Naive thymus-derived CD4-positive, alpha-beta T cell (primary cell): ENCODE measurements at regions of chr3 and their contacts with region 1.

Region 1: GRCh38 chr3:171320750-171321558 is 139.3 kb downstream of the TNIK start:
- DNase-seq: no peak
- ATAC-seq: no peak
- H3K4me3 ChIP-seq: no peak overlapping the region
- H3K4me3 Mint-ChIP-seq: no peak overlapping the region
- H3K27ac ChIP-seq: no peak overlapping the region
- H3K27ac Mint-ChIP-seq: no peak overlapping the region
- H3K4me1 ChIP-seq: peaks cover 0 to 7% of the 10 kb centered on the region in 2 donors
- H3K4me1 Mint-ChIP-seq: peaks cover 20 to 66% (median 46%) of the 10 kb centered on the region in 7 donors
- H3K27me3 ChIP-seq: no peaks in the 10 kb centered on the region
- H3K27me3 Mint-ChIP-seq: no peaks in the 10 kb centered on the region

Region 2: GRCh38 chr3:170614214-170614966 is 706.6 kb before region 1 on chr3:
- CTCF ChIA-PET with region 1: no interaction called
- POLR2A ChIA-PET with region 1: no interaction called
- intact Hi-C with region 1: no loop called
- DNase-seq: no peak
- ATAC-seq: no peak
- H3K4me3 ChIP-seq: no peak overlapping the region
- H3K4me3 Mint-ChIP-seq: no peak overlapping the region
- H3K27ac ChIP-seq: no peak overlapping the region
- H3K27ac Mint-ChIP-seq: no peak overlapping the region
- H3K4me1 ChIP-seq: no peaks in the 10 kb centered on the region
- H3K4me1 Mint-ChIP-seq: no peaks in the 10 kb centered on the region
- H3K27me3 ChIP-seq: no peaks in the 10 kb centered on the region
- H3K27me3 Mint-ChIP-seq: peaks cover 0 to 11% (median 6%) of the 10 kb centered on the region in 5 donors

Region 3: GRCh38 chr3:171301998-171302397 is 19.0 kb before region 1 on chr3:
- CTCF ChIA-PET with region 1: no interaction called
- POLR2A ChIA-PET with region 1: no interaction called
- intact Hi-C with region 1: loop called in 1 of 2 experiments (anchors 2 kb)
- DNase-seq: no peak
- ATAC-seq: no peak
- H3K4me3 ChIP-seq: no peak overlapping the region
- H3K4me3 Mint-ChIP-seq: no peak overlapping the region
- H3K27ac ChIP-seq: no peak overlapping the region
- H3K27ac Mint-ChIP-seq: no peak overlapping the region
- H3K4me1 ChIP-seq: peaks cover 0 to 16% of the 10 kb centered on the region in 2 donors
- H3K4me1 Mint-ChIP-seq: peaks cover 34 to 88% (median 82%) of the 10 kb centered on the region in 7 donors
- H3K27me3 ChIP-seq: no peaks in the 10 kb centered on the region
- H3K27me3 Mint-ChIP-seq: no peaks in the 10 kb centered on the region

Region 4: GRCh38 chr3:171309906-171310359 is 11.0 kb before region 1 on chr3:
- CTCF ChIA-PET with region 1: interaction called, 3 read pairs
- POLR2A ChIA-PET with region 1: interaction called, 3 read pairs
- intact Hi-C with region 1: loop called in 1 of 2 experiments (anchors 1 kb)
- DNase-seq: no peak
- ATAC-seq: no peak
- H3K4me3 ChIP-seq: no peak overlapping the region
- H3K4me3 Mint-ChIP-seq: peak overlapping the region in 1 of 10 donors; percentile 73
- H3K27ac ChIP-seq: no peak overlapping the region
- H3K27ac Mint-ChIP-seq: peak overlapping the region in 5 of 9 donors; percentile 4 to 75 (median 45)
- H3K4me1 ChIP-seq: peaks cover 0 to 8% of the 10 kb centered on the region in 2 donors
- H3K4me1 Mint-ChIP-seq: peaks cover 35 to 96% (median 88%) of the 10 kb centered on the region in 7 donors
- H3K27me3 ChIP-seq: no peaks in the 10 kb centered on the region
- H3K27me3 Mint-ChIP-seq: no peaks in the 10 kb centered on the region

Region 5: DNA sequence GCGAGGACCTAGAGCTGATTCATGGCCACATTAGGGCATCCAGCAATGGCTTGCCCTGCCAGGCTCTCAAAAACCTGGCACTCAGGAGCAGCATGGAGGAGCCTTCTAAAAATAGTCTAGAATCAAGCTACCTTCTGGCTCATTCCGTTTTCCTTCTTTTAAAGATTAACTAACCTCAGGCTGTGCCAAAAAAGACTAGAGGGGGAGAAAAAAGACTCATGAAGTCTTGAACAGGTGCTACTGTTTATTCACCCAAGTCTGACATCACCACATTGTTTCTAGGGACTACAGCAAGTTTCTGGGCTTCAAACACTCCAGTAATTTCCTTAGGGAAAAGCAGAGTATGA is 13.5 kb after region 1 on chr3:
- CTCF ChIA-PET with region 1: no interaction called
- POLR2A ChIA-PET with region 1: no interaction called
- intact Hi-C with region 1: loop called in 1 of 2 experiments (anchors 2 kb)
- DNase-seq: no peak
- ATAC-seq: no peak
- H3K4me3 ChIP-seq: no peak overlapping the region
- H3K4me3 Mint-ChIP-seq: no peak overlapping the region
- H3K27ac ChIP-seq: no peak overlapping the region
- H3K27ac Mint-ChIP-seq: peak overlapping the region in 6 of 9 donors; percentile 9 to 87 (median 51)
- H3K4me1 ChIP-seq: peaks cover 5 to 8% of the 10 kb centered on the region in 2 donors
- H3K4me1 Mint-ChIP-seq: peaks cover 19 to 92% (median 82%) of the 10 kb centered on the region in 7 donors
- H3K27me3 ChIP-seq: no peaks in the 10 kb centered on the region
- H3K27me3 Mint-ChIP-seq: no peaks in the 10 kb centered on the region